ENCODE measurements at regions of chr4 and their contacts with region 1.

Region 1: DNA sequence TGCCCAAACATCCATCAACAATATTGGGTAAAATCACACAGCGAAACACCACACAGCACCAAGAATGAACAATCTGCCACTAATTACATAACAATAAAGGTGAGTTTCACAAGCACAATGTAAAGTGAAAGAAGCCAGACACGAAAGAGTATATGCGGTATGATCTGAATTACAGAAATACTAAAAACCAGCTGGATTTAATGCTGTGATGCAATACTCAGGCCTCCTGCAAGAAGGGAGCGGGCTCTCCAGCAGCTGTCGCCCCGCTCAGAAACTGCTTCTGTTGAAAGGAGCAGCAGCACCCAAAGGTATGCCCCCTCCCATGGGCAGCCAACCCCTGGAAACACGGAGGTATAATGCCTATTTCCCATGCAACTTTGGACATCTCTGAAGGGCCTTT is 77.0 kb downstream of the PAPSS1 start:
- DNase-seq: no peak
- ATAC-seq: no peak
- H3K4me3 ChIP-seq: no peak overlapping the region
- H3K27ac ChIP-seq: no peak overlapping the region
- H3K4me1 ChIP-seq: peaks cover 5% of the 10 kb centered on the region; the same call in 1 of the 2 replicates
- H3K27me3 ChIP-seq: no peaks in the 10 kb centered on the region
- CTCF ChIP-seq: no peak
- EP300 ChIP-seq: no peak
- POLR2A ChIP-seq: no peak
- RAD21 ChIP-seq: no peak

Region 2: DNA sequence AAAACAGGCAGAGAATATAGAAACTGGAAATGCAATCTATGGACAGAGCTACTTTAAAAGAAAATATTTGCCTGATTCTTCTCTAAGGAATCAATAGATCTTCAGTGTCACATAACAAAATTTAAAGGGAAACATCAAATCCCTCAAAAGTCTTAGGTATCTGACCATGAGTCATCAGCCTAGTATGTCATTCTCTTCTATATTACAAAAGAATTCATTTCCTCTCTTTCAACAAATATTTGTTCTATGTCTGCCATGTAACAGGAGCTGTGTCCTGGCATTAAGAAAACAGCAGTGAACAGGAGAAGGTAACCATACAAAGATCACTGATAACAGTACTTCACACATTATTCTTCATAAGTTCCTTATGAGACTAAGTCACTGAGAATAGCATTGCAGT is 363.3 kb before region 1 on chr4:
- CTCF ChIA-PET with region 1: no interaction called
- POLR2A ChIA-PET with region 1: no interaction called
- in situ Hi-C with region 1: no loop called
- intact Hi-C with region 1: no loop called
- DNase-seq: peak; percentile 23
- ATAC-seq: no peak
- H3K4me3 ChIP-seq: no peak overlapping the region
- H3K27ac ChIP-seq: no peak overlapping the region
- H3K4me1 ChIP-seq: no peaks in the 10 kb centered on the region
- H3K27me3 ChIP-seq: no peaks in the 10 kb centered on the region
- CTCF ChIP-seq: no peak
- EP300 ChIP-seq: no peak
- POLR2A ChIP-seq: no peak
- RAD21 ChIP-seq: no peak

Region 3: GRCh38 chr4:108130954-108131353 is 487.9 kb after region 1 on chr4:
- CTCF ChIA-PET with region 1: no interaction called
- POLR2A ChIA-PET with region 1: no interaction called
- in situ Hi-C with region 1: no loop called
- intact Hi-C with region 1: loop called (anchors 5 kb)
- DNase-seq: no peak
- ATAC-seq: no peak
- H3K4me3 ChIP-seq: no peak overlapping the region
- H3K27ac ChIP-seq: no peak overlapping the region
- H3K4me1 ChIP-seq: no peaks in the 10 kb centered on the region
- H3K27me3 ChIP-seq: no peaks in the 10 kb centered on the region
- CTCF ChIP-seq: 0 out of 2 replicates have a peak, but pooled peaks have one; percentile 10
- EP300 ChIP-seq: no peak
- POLR2A ChIP-seq: no peak
- RAD21 ChIP-seq: no peak

Measured in HepG2 (cell line).